Colonic mucosa (tissue), 4 donors: ENCODE measurements at regions of chr3 and their contacts with region 1.

Region 1: GRCh38 chr3:87025661-87026635 is 35.0 kb upstream of the VGLL3 start:
- DNase-seq: no peak
- H3K4me3 ChIP-seq: no peak overlapping the region
- H3K27ac ChIP-seq: no peak overlapping the region
- H3K4me1 ChIP-seq: no peaks in the 10 kb centered on the region
- H3K27me3 ChIP-seq: no peaks in the 10 kb centered on the region
- CTCF ChIP-seq: no peak

Region 2: DNA sequence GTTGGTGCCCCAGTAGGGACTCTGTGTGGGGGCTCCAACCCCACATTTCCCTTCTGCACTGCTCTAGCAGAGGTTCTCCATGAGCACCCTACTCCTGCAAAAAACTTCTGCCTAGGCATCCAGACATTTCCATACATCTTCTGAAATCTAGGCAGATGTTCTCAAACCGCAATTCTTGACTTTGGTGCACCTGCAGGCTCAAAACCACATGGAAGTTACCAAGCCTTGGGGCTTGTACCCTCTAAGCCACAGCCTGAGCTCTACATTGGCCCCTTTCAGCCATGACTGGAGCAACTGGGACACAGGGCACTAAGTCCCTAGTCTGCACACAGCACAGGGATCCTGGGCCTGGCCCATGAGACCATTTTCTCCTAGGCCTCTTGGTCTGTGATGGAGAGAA is 31.5 kb after region 1 on chr3:
- intact Hi-C with region 1: loop called (anchors 5 kb)
- DNase-seq: no peak
- H3K4me3 ChIP-seq: no peak overlapping the region
- H3K27ac ChIP-seq: no peak overlapping the region
- H3K4me1 ChIP-seq: no peaks in the 10 kb centered on the region
- H3K27me3 ChIP-seq: no peaks in the 10 kb centered on the region
- CTCF ChIP-seq: no peak

Region 3: DNA sequence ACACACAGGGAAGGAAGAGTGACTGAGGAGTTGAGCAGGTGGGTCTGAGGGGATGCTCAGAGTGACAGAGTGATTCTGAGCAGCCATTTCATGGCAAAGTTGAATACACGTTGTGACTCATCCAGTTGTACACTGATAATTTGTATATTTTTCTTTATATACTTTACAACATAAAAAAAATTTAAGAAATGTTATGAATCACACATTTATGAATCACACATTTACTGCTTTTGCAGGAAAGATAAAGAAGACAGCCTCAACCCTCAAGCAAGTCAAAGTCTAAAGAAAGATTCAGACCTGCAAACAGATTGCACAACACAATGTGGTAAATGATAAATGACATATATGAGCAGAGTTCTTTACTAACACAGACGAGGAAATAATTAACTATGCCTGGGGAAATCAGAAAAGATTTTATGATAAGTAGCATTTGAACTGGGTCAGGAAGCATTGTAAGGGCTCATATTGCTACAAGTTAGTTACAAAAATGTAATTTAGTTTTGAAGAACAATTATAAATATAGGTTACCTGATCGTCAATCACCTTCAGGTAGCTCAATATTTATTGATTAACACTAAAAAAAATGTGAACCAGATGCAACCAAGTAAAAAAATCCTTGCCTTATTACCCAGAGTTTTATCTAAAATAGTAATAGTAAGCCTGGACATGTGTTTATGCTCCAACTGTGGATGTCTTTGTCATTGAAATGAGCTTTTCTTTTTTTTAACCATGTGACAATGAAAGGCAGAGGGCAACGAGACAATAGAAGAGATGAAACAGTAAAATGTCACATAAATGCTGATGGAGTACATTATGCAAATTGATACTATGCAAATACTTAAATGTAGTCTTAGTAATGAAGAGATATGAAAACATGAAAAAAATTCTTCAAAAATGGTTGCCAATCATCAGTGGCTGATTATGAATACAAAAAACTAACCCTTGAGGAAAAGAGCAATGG is 180.4 kb after region 1 on chr3:
- intact Hi-C with region 1: no loop called
- DNase-seq: no peak
- H3K4me3 ChIP-seq: no peak overlapping the region
- H3K27ac ChIP-seq: peak overlapping the region; percentile 32
- H3K4me1 ChIP-seq: no peaks in the 10 kb centered on the region
- H3K27me3 ChIP-seq: no peaks in the 10 kb centered on the region
- CTCF ChIP-seq: no peak